B cell (primary cell): ENCODE measurements at regions of chr6 and their contacts with region 1.

Region 1: GRCh38 chr6:42901536-42901957 is 14.3 kb upstream of the PTCRA start:
- DNase-seq: peak; percentile 88
- ATAC-seq: peak; percentile 99
- H3K4me3 ChIP-seq: no peak overlapping the region
- H3K4me3 Mint-ChIP-seq: no peak overlapping the region
- H3K27ac ChIP-seq: no peak overlapping the region
- H3K27ac Mint-ChIP-seq: no peak overlapping the region
- H3K4me1 ChIP-seq: peaks cover 5 to 8% of the 10 kb centered on the region in 2 donors
- H3K4me1 Mint-ChIP-seq: peaks cover 10% of the 10 kb centered on the region
- H3K27me3 ChIP-seq: no peaks in the 10 kb centered on the region
- H3K27me3 Mint-ChIP-seq: no peaks in the 10 kb centered on the region
- CTCF ChIP-seq: peak; percentile 93

Region 2: GRCh38 chr6:42993445-42993844 is 91.9 kb after region 1 on chr6:
- CTCF ChIA-PET with region 1: no interaction called
- POLR2A ChIA-PET with region 1: no interaction called
- intact Hi-C with region 1: no loop called
- DNase-seq: no peak
- ATAC-seq: no peak
- H3K4me3 ChIP-seq: no peak overlapping the region
- H3K4me3 Mint-ChIP-seq: no peak overlapping the region
- H3K27ac ChIP-seq: no peak overlapping the region
- H3K27ac Mint-ChIP-seq: no peak overlapping the region
- H3K4me1 ChIP-seq: no peaks in the 10 kb centered on the region
- H3K4me1 Mint-ChIP-seq: no peaks in the 10 kb centered on the region
- H3K27me3 ChIP-seq: no peaks in the 10 kb centered on the region
- H3K27me3 Mint-ChIP-seq: no peaks in the 10 kb centered on the region
- CTCF ChIP-seq: no peak

Region 3: DNA sequence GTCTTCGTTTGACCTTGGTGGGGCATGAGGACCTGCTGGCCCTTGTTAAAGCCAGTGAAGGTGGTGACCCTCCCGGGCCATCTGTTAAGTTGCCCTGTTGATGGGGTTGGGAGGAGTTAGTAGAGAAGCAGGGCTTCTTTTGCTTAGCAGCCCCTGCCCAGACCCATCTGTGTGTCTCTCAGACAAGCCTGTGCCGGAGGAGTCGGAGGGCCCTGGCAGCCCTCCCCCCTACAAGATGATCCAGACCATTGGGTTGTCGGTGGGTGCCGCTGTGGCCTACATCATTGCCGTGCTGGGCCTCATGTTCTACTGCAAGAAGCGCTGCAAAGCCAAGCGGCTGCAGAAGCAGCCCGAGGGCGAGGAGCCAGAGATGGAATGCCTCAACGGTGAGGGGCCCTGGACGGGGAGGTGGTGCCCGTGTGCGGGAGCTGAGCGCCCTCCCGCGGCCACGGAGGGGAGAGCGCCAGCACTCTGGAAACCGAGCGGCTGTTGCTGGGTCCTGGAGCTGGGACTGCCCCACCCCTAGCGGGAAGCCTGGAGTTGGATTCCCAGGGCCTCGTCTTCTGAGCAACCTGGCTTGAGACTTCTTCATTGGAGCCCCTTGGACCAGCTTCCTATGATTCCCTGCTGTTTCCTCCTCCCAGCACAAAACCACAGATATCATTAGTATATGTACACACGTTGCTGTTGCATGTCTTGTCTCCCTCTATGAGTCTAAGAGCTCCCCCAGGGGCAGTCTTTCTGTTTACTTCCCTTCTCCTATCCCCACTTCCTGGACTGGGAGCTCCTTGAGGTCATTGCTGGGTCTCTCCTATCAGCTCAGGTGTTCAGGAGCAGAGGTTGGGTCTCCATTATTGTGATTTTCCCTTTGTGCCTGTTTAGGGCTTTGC is 241.9 kb after region 1 on chr6:
- CTCF ChIA-PET with region 1: interaction called, 50 read pairs
- POLR2A ChIA-PET with region 1: no interaction called
- intact Hi-C with region 1: no loop called
- DNase-seq: peak; percentile 76
- ATAC-seq: peak; percentile 93
- H3K4me3 ChIP-seq: peak overlapping the region in 1 of 5 experiments; percentile 3
- H3K4me3 Mint-ChIP-seq: no peak overlapping the region
- H3K27ac ChIP-seq: no peak overlapping the region
- H3K27ac Mint-ChIP-seq: no peak overlapping the region
- H3K4me1 ChIP-seq: peaks cover 7 to 8% of the 10 kb centered on the region in 2 donors
- H3K4me1 Mint-ChIP-seq: peaks cover 8% of the 10 kb centered on the region
- H3K27me3 ChIP-seq: peaks cover 0 to 4% (median 0%) of the 10 kb centered on the region in 4 experiments
- H3K27me3 Mint-ChIP-seq: peaks cover 9% of the 10 kb centered on the region
- CTCF ChIP-seq: peak; percentile 87